ENCODE measurements at regions of chr17 and their contacts with region 1.

Region 1: DNA sequence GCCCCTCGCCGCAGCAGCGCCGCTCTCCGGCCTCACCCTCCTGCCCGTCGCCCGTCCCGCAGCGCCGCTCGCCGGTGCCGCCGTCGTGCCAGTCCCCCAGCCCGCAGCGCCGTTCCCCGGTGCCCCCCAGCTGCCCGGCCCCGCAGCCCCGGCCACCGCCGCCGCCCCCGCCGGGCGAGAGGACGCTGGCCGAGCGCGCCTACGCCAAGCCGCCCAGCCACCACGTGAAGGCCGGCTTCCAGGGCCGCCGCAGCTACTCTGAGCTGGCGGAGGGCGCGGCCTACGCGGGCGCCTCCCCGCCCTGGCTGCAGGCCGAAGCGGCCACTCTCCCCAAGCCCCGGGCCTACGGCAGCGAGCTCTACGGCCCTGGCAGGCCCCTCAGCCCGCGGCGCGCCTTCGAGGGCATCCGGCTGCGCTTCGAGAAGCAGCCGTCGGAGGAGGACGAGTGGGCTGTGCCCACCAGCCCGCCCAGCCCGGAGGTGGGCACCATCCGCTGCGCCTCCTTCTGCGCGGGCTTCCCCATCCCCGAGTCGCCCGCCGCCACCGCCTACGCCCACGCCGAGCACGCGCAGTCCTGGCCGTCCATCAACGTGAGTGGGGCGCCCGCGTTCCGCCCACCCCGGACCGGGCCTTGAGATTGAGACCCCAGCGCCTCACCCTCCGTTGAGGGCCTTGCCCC is 15.0 kb downstream of the TBKBP1 start:
- DNase-seq: no peak
- H3K4me3 ChIP-seq: no peak overlapping the region
- H3K27ac ChIP-seq: no peak overlapping the region
- H3K4me1 ChIP-seq: no peaks in the 10 kb centered on the region
- H3K27me3 ChIP-seq: no peaks in the 10 kb centered on the region
- CTCF ChIP-seq: no peak

Region 2: GRCh38 chr17:47762728-47763127 is 53.7 kb after region 1 on chr17:
- CTCF ChIA-PET with region 1: no interaction called
- dilution Hi-C with region 1: no loop called
- in situ Hi-C with region 1: no loop called
- intact Hi-C with region 1: no loop called
- DNase-seq: no peak
- H3K4me3 ChIP-seq: no peak overlapping the region
- H3K27ac ChIP-seq: no peak overlapping the region
- H3K4me1 ChIP-seq: no peaks in the 10 kb centered on the region
- H3K27me3 ChIP-seq: peaks cover 5% of the 10 kb centered on the region
- CTCF ChIP-seq: no peak

Region 3: GRCh38 chr17:47789611-47790561 is 80.9 kb after region 1 on chr17:
- CTCF ChIA-PET with region 1: no interaction called
- dilution Hi-C with region 1: loop called (anchors 10 kb)
- in situ Hi-C with region 1: no loop called
- intact Hi-C with region 1: no loop called
- DNase-seq: peak; percentile 50
- H3K4me3 ChIP-seq: peak overlapping the region in 2 of 3 experiments; percentile 32 to 34
- H3K27ac ChIP-seq: no peak overlapping the region
- H3K4me1 ChIP-seq: peaks cover 7% of the 10 kb centered on the region
- H3K27me3 ChIP-seq: peaks cover 22% of the 10 kb centered on the region
- CTCF ChIP-seq: peak; percentile 17 to 50

Region 4: GRCh38 chr17:47808036-47808829 is 99.2 kb after region 1 on chr17:
- CTCF ChIA-PET with region 1: no interaction called
- dilution Hi-C with region 1: loop called (anchors 5 kb)
- in situ Hi-C with region 1: no loop called
- intact Hi-C with region 1: no loop called
- DNase-seq: no peak
- H3K4me3 ChIP-seq: no peak overlapping the region
- H3K27ac ChIP-seq: no peak overlapping the region
- H3K4me1 ChIP-seq: peaks cover 23% of the 10 kb centered on the region
- H3K27me3 ChIP-seq: no peaks in the 10 kb centered on the region
- CTCF ChIP-seq: no peak